CD8-positive, alpha-beta memory T cell (primary cell): ENCODE measurements at regions of chr15 and their contacts with region 1.

Region 1: DNA sequence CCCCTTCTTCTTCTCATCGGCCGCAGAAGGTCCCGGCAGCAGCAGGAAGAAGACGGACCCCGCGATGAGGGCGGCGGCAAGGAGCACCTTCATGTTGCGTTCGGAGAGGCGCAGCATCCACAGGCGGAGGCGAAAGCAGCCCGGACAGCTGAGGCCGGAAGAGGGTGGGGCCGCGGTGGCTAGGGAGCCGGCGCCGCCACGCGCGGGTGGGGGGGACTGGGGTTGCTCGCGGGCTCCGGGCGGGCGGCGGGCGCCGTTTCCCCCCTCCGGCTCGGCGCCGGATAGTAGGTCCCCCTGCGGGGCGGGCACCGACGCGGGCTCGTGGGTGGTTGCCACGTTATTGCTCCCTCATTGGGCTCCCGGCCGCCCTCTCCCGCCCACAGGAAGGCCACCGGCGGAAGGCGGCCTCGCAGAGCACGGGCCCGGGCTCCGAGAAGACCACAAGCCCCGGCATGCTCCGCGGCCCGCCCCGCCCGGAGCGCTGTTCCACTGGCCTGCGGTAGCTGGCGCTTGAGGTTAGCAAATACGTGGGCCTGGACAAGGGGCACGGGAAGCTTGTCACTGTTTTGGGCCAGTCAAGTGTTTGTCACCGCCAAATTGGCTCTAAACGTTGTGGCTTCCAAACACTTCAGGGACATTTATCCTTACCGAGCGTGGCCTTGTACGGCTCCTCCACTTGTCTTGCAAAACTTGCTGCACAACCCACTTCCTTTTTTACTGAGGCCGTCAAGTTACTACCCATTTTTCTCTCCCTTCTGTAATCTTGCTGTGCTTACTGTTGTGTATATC is at the start of gene PPIB:
- DNase-seq: peak; percentile 94 to 97 (median 97)
- H3K4me3 ChIP-seq: peak within 1 kb of the TSS; percentile 65
- H3K4me3 Mint-ChIP-seq: peak within 1 kb of the TSS; percentile 88 to 97 (median 90)
- H3K27ac ChIP-seq: peak within 1 kb of the TSS; percentile 77
- H3K27ac Mint-ChIP-seq: peak within 1 kb of the TSS; percentile 79 to 98 (median 96)
- H3K4me1 ChIP-seq: peaks cover 37% of the 10 kb centered on the region
- H3K4me1 Mint-ChIP-seq: peaks cover 37 to 56% (median 55%) of the 10 kb centered on the region in 3 donors
- H3K27me3 ChIP-seq: no peaks in the 10 kb centered on the region
- H3K27me3 Mint-ChIP-seq: no peaks in the 10 kb centered on the region
- total RNA-seq, gene PPIB: 384 to 385 TPM

Region 2: DNA sequence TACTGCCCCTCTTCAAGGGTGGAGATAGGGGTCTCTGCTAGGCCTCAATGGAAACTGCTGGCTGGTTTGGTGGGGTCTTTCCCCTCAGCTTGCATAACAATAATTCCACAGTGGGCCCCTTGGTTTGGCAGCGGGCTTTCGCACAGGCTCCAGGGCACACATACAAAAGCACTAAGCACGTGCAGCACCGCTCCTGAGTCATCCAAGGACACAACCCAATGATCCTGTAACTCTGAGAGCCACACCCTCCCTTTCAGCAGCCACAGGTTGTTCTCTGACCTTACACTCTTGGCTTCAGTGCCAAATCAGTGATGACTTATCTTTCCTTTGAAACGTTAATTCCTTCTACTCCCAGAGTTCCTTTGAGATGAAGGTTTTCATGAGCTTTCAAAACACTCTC is 158.5 kb before region 1 on chr15:
- CTCF ChIA-PET with region 1: no interaction called
- POLR2A ChIA-PET with region 1: no interaction called
- DNase-seq: no peak
- H3K4me3 ChIP-seq: no peak overlapping the region
- H3K4me3 Mint-ChIP-seq: no peak overlapping the region
- H3K27ac ChIP-seq: no peak overlapping the region
- H3K27ac Mint-ChIP-seq: peak overlapping the region in 4 of 8 donors; percentile 20 to 81 (median 36)
- H3K4me1 ChIP-seq: peaks cover 21% of the 10 kb centered on the region
- H3K4me1 Mint-ChIP-seq: peaks cover 26 to 74% (median 54%) of the 10 kb centered on the region in 3 donors
- H3K27me3 ChIP-seq: no peaks in the 10 kb centered on the region
- H3K27me3 Mint-ChIP-seq: peaks cover 0 to 4% of the 10 kb centered on the region in 2 donors

Region 3: DNA sequence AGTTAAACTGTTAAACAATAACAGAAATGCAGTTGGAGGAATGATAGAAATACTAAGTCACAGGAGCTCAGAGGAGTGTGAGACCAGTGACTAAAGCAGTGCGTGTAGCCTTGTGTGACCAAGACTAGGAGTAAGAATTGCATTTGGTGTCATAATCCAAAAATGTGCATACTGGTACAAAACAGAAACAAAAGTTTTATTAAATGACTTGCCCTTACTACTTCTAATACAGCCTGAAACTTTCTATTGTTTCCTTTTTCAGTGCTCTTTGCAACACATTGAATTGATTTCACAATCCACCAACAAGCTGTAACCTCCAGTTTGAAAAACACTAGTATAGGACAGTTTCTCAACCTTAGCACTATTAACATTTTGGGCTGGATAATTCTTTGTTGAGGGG is 50.2 kb before region 1 on chr15:
- CTCF ChIA-PET with region 1: no interaction called
- POLR2A ChIA-PET with region 1: no interaction called
- DNase-seq: no peak
- H3K4me3 ChIP-seq: no peak overlapping the region
- H3K4me3 Mint-ChIP-seq: no peak overlapping the region
- H3K27ac ChIP-seq: no peak overlapping the region
- H3K27ac Mint-ChIP-seq: no peak overlapping the region
- H3K4me1 ChIP-seq: peaks cover 31% of the 10 kb centered on the region
- H3K4me1 Mint-ChIP-seq: peaks cover 26 to 42% (median 39%) of the 10 kb centered on the region in 3 donors
- H3K27me3 ChIP-seq: no peaks in the 10 kb centered on the region
- H3K27me3 Mint-ChIP-seq: no peaks in the 10 kb centered on the region

Region 4: DNA sequence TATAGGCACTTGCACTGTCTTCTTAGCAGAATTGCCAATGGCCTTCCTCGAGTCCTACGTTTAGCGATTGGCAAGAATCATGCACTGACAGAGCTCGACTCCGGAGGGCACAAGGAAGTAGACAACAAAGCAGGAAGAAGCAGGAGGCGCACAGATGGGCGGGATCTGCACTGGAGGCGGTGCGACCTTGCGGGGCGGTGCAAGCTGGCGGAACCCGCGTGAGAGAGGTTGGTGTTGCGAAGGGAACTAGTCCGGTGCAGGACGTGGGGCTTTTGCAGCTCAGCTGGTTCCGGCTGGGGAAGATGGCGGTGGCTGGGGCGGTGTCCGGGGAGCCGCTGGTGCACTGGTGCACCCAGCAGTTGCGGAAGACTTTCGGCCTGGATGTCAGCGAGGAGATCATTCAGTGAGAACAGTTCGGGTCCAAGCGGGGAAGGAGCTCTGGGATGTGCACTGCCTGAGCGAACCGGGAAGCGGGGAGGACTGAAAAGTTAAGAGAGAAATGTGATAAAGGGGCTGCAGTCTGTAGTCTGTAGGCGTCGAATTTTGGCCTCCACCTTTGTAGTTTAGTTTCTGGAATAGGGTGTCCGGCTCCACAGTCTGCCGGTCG is 224.6 kb after region 1 on chr15 and contains the start of gene TRIP4:
- CTCF ChIA-PET with region 1: interaction called, 4 read pairs
- POLR2A ChIA-PET with region 1: interaction called, 19 read pairs
- DNase-seq: peak; percentile 93 to 97 (median 95)
- H3K4me3 ChIP-seq: peak within 1 kb of the TSS; percentile 96
- H3K4me3 Mint-ChIP-seq: peak within 1 kb of the TSS; percentile 94 to 100 (median 98)
- H3K27ac ChIP-seq: peak within 1 kb of the TSS; percentile 81
- H3K27ac Mint-ChIP-seq: peak within 1 kb of the TSS; percentile 73 to 98 (median 96)
- H3K4me1 ChIP-seq: peaks cover 19% of the 10 kb centered on the region
- H3K4me1 Mint-ChIP-seq: peaks cover 17 to 27% (median 20%) of the 10 kb centered on the region in 3 donors
- H3K27me3 ChIP-seq: no peaks in the 10 kb centered on the region
- H3K27me3 Mint-ChIP-seq: no peaks in the 10 kb centered on the region
- total RNA-seq, gene TRIP4: 25.1 to 26.2 TPM